ENCODE measurements at regions of chr6 and their contacts with region 1.

Region 1: GRCh38 chr6:33040157-33040556 is 30.8 kb upstream of the HLA-DOA start:
- DNase-seq: no peak
- H3K4me3 ChIP-seq: no peak overlapping the region
- CTCF ChIP-seq: no peak
- POLR2A ChIP-seq: no peak

Region 2: GRCh38 chr6:33237741-33238140 is 197.6 kb after region 1 on chr6:
- intact Hi-C with region 1: loop called (anchors 2 kb)
- DNase-seq: peak in 1 of 2 donors; percentile 7
- H3K4me3 ChIP-seq: no peak overlapping the region
- CTCF ChIP-seq: no peak
- POLR2A ChIP-seq: no peak

Region 3: DNA sequence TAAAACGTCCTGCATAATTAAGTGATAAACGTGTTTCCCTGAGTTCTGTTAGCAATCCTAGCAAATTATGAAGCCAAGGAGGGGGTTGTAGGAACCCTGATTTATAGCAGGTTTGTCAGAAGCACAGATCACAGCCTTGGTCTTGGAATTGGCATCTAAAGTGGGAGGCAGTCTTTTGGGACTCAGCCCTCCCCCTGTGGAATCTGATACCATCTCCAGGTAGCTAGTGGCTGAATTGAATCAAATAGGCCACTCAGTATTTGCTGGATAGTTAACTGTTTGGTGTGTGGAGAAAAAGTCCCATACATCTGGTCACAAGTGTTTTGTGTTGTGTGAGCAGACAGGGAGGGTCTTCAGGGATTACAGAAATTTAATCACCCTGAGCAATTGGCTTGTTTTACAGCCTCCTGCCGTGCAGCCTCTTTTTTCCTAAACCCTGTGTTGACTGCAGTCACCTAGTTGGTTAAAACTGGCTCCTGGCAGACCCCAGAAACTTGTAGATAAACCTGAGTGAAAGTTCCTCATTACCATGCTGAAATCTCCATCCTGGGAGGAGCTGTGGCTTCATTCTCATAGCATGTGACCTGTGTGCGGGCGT is 332.5 kb after region 1 on chr6:
- intact Hi-C with region 1: no loop called
- DNase-seq: no peak
- H3K4me3 ChIP-seq: no peak overlapping the region
- CTCF ChIP-seq: no peak
- POLR2A ChIP-seq: no peak

Measured in lower leg skin (tissue), 4 donors.